HCT116 (cell line): ENCODE measurements at regions of chr12 and their contacts with region 1.

Region 1: GRCh38 chr12:47837190-47838171 is 17.8 kb upstream of the HDAC7 start:
- DNase-seq: peak; percentile 66
- ATAC-seq: peak; percentile 76
- H3K4me3 ChIP-seq: no peak overlapping the region
- H3K27ac ChIP-seq: no peak overlapping the region
- H3K4me1 ChIP-seq: peaks cover 10 to 25% of the 10 kb centered on the region in 2 experiments; a peak in 2 of 4 replicates
- H3K27me3 ChIP-seq: no peaks in the 10 kb centered on the region
- CTCF ChIP-seq: peak; percentile 82 to 96 (median 95)
- POLR2A ChIP-seq: no peak
- RAD21 ChIP-seq: peak; percentile 95

Region 2: GRCh38 chr12:47032644-47033043 is 804.8 kb before region 1 on chr12:
- CTCF ChIA-PET with region 1: interaction called, 3 read pairs
- POLR2A ChIA-PET with region 1: no interaction called
- RAD21 ChIA-PET with region 1: no interaction called
- intact Hi-C with region 1: loop called (anchors 5 kb)
- DNase-seq: peak; percentile 36
- ATAC-seq: peak; percentile 77
- H3K4me3 ChIP-seq: no peak overlapping the region
- H3K27ac ChIP-seq: no peak overlapping the region
- H3K4me1 ChIP-seq: peaks cover 3 to 6% of the 10 kb centered on the region in 2 experiments; a peak in 3 of 4 replicates
- H3K27me3 ChIP-seq: no peaks in the 10 kb centered on the region
- CTCF ChIP-seq: peak; percentile 38 to 89 (median 66); a peak in 5 of 6 replicates
- POLR2A ChIP-seq: no peak
- RAD21 ChIP-seq: peak; percentile 85

Region 3: DNA sequence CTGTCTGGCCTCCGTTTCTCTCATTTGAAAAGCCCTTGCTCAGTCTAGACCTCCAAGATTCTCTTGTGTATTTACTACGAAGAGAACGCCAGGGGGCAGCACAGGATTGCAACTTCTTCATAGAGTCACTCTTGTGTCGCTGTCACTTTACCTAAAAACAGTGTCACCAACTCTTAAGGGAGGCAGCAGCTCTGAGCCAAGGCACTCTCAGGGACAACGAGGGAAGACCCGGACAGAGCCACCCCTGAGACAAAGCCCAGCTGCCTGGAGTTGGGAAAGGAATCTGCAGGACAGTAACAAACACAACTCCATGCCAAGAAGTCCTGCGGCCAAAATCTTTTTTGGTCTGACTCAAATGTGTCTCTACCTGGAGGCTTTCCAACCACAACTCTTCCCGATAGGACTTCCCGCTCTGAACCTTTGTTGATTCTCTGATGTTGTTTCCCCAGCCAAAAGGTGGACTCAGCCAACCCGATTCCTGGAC is 122.0 kb before region 1 on chr12:
- CTCF ChIA-PET with region 1: interaction called, 63 read pairs
- POLR2A ChIA-PET with region 1: no interaction called
- RAD21 ChIA-PET with region 1: interaction called, 4 to 9 read pairs
- intact Hi-C with region 1: loop called (anchors 1 kb)
- DNase-seq: peak; percentile 74
- ATAC-seq: peak; percentile 87
- H3K4me3 ChIP-seq: no peak overlapping the region
- H3K27ac ChIP-seq: no peak overlapping the region
- H3K4me1 ChIP-seq: peaks cover 0 to 7% of the 10 kb centered on the region in 2 experiments; a peak in 1 of 4 replicates
- H3K27me3 ChIP-seq: no peaks in the 10 kb centered on the region
- CTCF ChIP-seq: peak; percentile 70 to 90 (median 86)
- POLR2A ChIP-seq: no peak
- RAD21 ChIP-seq: peak; percentile 95

Region 4: DNA sequence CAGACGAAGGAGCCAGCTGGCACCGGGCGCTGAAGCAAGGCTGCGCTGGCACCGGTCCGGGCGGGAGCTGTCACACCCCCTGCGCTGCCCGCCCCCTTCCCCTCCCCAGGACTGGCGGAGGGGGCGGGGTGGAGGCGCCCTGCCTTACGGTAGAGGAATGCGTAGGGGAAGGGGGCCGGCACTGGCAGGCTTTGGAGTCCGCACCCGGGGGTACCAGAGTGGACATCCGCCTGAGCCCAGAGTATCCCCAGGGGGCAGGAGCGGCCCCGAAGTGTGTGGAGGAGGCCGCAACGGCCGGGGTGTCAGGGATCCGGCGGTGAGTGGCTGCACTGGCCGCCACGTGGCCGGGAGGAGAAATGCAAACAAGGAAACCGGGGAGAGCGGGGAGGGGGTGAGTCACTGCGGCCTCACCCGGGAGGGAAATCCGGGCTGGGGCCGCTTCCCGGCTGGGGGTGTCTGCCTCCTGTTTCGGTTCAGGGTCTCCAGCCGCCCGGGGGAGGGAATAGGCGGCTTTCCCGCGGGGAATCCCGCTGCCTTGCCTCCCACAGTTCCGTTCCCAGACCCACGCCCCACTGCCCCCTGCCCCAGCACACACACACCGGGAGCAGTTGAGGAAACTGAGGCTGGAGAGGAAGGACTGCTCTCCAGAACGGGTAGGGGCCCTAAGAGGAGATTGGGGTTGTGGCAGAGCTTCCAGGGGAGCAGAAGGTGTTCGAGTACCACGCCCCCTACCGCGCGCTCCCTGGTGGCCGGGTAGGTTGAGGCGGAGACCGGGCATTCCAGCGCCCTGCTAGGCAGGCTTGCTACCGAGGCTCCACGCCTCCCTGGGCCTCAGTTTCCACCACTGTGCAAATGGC is 78.4 kb before region 1 on chr12 and contains the start of gene RAPGEF3:
- CTCF ChIA-PET with region 1: interaction called, 16 read pairs
- POLR2A ChIA-PET with region 1: no interaction called
- RAD21 ChIA-PET with region 1: interaction called in 1 of 2 experiments, 4 read pairs
- intact Hi-C with region 1: no loop called
- DNase-seq: no peak
- ATAC-seq: peak; percentile 89
- H3K4me3 ChIP-seq: peak within 1 kb of the TSS; percentile 65 to 73
- H3K27ac ChIP-seq: peak within 1 kb of the TSS; percentile 62
- H3K4me1 ChIP-seq: peaks cover 26 to 36% of the 10 kb centered on the region in 2 experiments
- H3K27me3 ChIP-seq: no peaks in the 10 kb centered on the region
- CTCF ChIP-seq: peak; percentile 59 to 79 (median 72)
- POLR2A ChIP-seq: no peak
- RAD21 ChIP-seq: no peak; the same call in 1 of the 2 replicates
- total RNA-seq, gene RAPGEF3: 1.8 TPM

Region 5: DNA sequence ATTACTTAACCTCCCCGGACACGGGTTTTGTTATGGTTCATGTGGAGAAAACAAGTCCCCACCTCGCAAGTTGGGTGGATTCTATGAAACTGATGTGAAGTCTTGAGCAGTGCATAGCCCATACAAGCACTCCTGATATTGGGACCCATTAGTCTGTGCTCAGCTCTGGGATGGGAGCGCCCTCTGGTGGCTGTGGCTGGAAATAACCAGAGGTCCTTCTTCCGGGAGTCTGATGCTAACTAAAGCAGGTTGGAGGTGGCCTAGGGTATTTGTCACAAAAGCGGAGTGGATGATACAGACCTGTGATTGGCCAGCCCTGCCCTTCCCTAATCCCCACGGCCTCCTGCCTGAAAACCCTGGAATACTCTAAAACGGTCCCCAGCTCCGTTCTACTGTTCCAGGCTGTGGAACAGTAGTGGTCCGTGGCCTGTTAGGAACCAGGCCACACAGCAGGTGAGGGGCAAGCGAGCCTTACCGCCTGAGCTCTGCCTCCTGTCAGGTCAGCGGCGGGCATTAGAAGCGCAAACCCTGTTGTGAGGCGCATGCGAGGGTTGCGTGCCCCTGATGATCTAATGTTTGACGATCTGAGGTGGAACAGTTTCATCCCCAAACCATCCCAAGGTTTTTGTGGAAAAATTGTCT is 58.1 kb before region 1 on chr12:
- CTCF ChIA-PET with region 1: interaction called, 26 read pairs
- POLR2A ChIA-PET with region 1: no interaction called
- RAD21 ChIA-PET with region 1: interaction called, 4 read pairs
- intact Hi-C with region 1: loop called (anchors 5 kb)
- DNase-seq: peak; percentile 61
- ATAC-seq: peak; percentile 89
- H3K4me3 ChIP-seq: no peak overlapping the region
- H3K27ac ChIP-seq: no peak overlapping the region
- H3K4me1 ChIP-seq: peaks cover 17 to 39% of the 10 kb centered on the region in 2 experiments
- H3K27me3 ChIP-seq: no peaks in the 10 kb centered on the region
- CTCF ChIP-seq: peak; percentile 91 to 97 (median 94)
- POLR2A ChIP-seq: no peak
- RAD21 ChIP-seq: peak; percentile 94

Region 6: GRCh38 chr12:47812797-47813510 is 24.5 kb before region 1 on chr12:
- CTCF ChIA-PET with region 1: interaction called, 26 read pairs
- POLR2A ChIA-PET with region 1: no interaction called
- RAD21 ChIA-PET with region 1: interaction called, 3 to 4 read pairs
- intact Hi-C with region 1: no loop called
- DNase-seq: no peak
- ATAC-seq: peak; percentile 79
- H3K4me3 ChIP-seq: peak overlapping the region; percentile 49 to 59
- H3K27ac ChIP-seq: peak overlapping the region; percentile 79
- H3K4me1 ChIP-seq: peaks cover 51 to 100% of the 10 kb centered on the region in 2 experiments
- H3K27me3 ChIP-seq: no peaks in the 10 kb centered on the region
- CTCF ChIP-seq: no peak
- POLR2A ChIP-seq: no peak
- RAD21 ChIP-seq: no peak